BJ (cell line): ENCODE measurements at regions of chr7 and their contacts with region 1.

Region 1: DNA sequence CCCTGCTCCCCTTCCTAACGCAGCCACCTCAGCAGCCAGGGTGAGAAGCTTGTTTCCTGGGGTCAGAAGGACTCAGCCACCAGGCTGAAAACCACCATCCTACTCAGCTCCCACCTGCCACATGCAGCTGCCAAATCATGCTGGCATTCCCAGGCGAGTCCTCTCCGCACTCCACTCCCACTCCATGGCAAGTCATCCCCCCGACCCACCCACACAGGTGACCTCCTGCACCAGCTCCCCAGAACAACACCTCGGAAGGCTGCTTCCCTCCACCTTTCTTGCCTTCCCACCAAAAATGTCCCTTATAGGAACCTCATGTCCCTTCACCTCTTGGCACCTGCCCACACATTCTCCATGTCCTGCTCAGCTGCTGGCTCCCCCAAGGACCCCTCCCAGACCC is 4.6 kb downstream of the PDAP1 start:
- DNase-seq: no peak
- H3K4me3 ChIP-seq: no peak overlapping the region
- H3K27me3 ChIP-seq: no peaks in the 10 kb centered on the region
- CTCF ChIP-seq: no peak

Region 2: DNA sequence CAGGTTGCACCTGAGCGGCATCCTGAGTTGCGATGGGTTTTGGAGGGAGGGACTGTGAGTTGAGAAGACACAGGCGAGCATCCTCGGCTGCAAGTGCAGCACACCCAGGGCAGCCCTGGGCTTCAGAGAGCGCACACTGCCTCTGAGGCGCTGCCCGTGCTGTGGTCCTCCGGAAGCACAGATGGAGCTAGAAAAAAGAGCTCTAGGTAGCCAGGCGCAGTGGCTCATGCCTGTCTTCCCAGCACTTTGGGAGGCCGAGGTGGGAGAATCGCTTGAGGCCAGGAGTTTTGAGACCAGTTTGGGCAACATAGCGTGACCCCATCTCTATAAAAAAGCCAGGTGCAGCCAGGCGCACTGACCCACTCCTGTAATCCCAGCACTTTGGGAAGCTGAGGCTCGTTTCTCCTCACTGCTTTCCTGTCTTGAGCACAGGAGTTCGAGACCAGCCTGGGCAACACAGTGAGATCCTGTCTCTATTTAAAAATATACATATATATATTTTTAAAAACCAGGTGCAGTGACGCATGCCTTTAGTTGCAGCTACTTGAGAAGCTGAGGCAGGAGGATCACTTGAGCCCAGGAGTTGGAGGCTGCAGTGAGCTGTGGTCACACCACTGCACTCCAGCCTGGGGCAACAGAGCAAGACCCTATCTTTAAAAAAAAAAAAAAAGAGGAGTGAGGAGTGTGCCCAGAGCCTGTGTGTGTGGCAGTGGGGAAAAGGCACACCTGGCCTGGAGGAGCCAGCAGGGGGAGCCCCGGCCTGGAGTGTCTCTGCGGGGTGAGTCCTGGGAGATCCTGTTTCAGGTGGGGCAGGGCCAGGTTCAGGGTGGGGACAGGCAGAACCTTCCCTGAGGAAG is 38.6 kb before region 1 on chr7:
- CTCF ChIA-PET with region 1: interaction called, 3 read pairs
- POLR2A ChIA-PET with region 1: interaction called, 14 read pairs
- DNase-seq: no peak
- H3K4me3 ChIP-seq: no peak overlapping the region
- H3K27me3 ChIP-seq: no peaks in the 10 kb centered on the region
- CTCF ChIP-seq: peak; percentile 59